ENCODE measurements at regions of chr6 and their contacts with region 1.

Region 1: GRCh38 chr6:163756079-163756478 is 341.6 kb downstream of the QKI start:
- DNase-seq: peak; percentile 84 to 93 (median 87)
- H3K4me3 ChIP-seq: peak overlapping the region in 1 of 3 experiments; percentile 54
- H3K4me3 Mint-ChIP-seq: peak overlapping the region in 1 of 2 donors; percentile 74
- H3K27ac ChIP-seq: peak overlapping the region; percentile 74 to 81
- H3K27ac Mint-ChIP-seq: peak overlapping the region; percentile 87 to 97 (median 95)
- H3K4me1 ChIP-seq: peaks cover 43 to 52% of the 10 kb centered on the region in 2 donors
- H3K4me1 Mint-ChIP-seq: peaks cover 53% of the 10 kb centered on the region
- H3K27me3 ChIP-seq: no peaks in the 10 kb centered on the region
- H3K27me3 Mint-ChIP-seq: peaks cover 12 to 14% (median 13%) of the 10 kb centered on the region in 3 donors
- CTCF ChIP-seq: no peak

Region 2: GRCh38 chr6:163711615-163712565 is 44.2 kb before region 1 on chr6:
- intact Hi-C with region 1: loop called (anchors 2 to 10 kb)
- DNase-seq: peak; percentile 82 to 88 (median 85)
- H3K4me3 ChIP-seq: peak overlapping the region in 1 of 3 experiments; percentile 52
- H3K4me3 Mint-ChIP-seq: peak overlapping the region in 1 of 2 donors; percentile 73
- H3K27ac ChIP-seq: peak overlapping the region; percentile 72 to 85
- H3K27ac Mint-ChIP-seq: peak overlapping the region; percentile 82 to 95 (median 93)
- H3K4me1 ChIP-seq: peaks cover 78 to 81% of the 10 kb centered on the region in 2 donors
- H3K4me1 Mint-ChIP-seq: peaks cover 70% of the 10 kb centered on the region
- H3K27me3 ChIP-seq: no peaks in the 10 kb centered on the region
- H3K27me3 Mint-ChIP-seq: peaks cover 0 to 11% (median 2%) of the 10 kb centered on the region in 3 donors
- CTCF ChIP-seq: no peak

Region 3: DNA sequence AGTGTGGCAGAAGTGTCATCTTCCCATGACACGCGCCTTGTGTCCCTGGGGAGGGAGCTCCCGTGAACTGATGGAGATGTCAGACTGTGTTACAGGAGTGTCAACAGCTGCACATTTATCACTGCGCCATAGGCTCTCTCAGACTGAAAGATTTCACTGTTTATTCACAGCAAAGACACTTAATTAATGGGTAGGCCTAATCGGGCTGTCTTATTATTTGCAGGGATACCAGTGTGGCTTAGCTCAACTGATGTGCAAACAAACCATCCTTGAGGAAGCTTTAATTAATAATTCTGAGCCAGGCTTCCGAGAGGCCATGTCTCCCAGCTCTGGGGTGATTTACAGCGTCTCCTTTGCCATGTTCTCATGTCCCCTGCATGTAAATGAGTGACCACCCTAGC is 429.4 kb after region 1 on chr6:
- intact Hi-C with region 1: no loop called
- DNase-seq: no peak
- H3K4me3 ChIP-seq: no peak overlapping the region
- H3K4me3 Mint-ChIP-seq: no peak overlapping the region
- H3K27ac ChIP-seq: no peak overlapping the region
- H3K27ac Mint-ChIP-seq: no peak overlapping the region
- H3K4me1 ChIP-seq: no peaks in the 10 kb centered on the region
- H3K4me1 Mint-ChIP-seq: no peaks in the 10 kb centered on the region
- H3K27me3 ChIP-seq: no peaks in the 10 kb centered on the region
- H3K27me3 Mint-ChIP-seq: peaks cover 0 to 1% (median 0%) of the 10 kb centered on the region in 3 donors
- CTCF ChIP-seq: no peak